ENCODE measurements at regions of chr6 and their contacts with region 1.

Region 1: DNA sequence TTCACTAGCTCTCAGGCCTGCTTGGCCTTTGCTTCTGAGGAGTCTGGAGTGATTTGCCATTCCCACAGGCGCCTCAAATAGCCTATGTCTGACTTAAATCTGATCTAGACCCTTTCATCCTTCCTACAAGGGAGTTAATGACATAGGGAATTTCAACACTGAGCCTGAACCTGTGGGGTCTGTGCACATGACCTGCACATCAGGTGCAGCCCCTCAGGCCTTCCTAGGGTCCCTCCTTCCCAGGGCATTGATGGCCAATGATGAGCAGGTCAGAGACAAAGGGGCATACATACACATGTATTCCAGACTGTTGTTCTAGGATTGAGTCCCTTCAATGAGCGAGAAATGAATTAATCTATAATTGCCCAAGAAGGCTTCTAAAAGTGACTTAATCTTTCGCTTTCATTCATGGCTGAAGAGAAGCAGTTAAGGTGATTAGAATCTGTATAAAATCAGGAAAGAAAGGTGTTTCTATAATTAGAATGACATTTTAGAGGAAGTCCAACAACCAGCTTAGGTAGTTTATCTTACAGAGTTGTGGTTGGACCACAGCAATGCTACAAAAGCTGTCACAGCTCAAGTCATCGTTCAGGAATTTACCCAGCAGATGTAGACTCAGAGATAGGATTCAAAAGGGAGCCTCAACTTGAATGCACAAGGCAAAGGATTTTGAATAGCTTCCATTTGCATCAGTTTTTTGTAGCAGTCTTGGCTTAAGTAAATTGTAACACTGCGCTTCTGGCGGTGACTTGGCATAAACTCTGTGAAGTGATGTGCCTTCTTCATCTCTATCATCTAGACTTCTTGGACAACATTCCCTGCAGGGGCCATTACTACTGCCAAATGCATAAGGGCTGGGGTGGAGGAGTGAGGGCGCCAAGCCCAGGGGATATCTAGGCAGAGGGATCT is 27.0 kb upstream of the TBC1D7 start:
- H3K4me3 Mint-ChIP-seq: no peak overlapping the region
- H3K27ac Mint-ChIP-seq: no peak overlapping the region
- H3K4me1 Mint-ChIP-seq: peaks cover 46% of the 10 kb centered on the region
- H3K27me3 Mint-ChIP-seq: peaks cover 4% of the 10 kb centered on the region

Region 2: GRCh38 chr6:13427801-13428582 is 72.7 kb after region 1 on chr6:
- intact Hi-C with region 1: loop called (anchors 10 kb)
- H3K4me3 Mint-ChIP-seq: peak overlapping the region; percentile 30
- H3K27ac Mint-ChIP-seq: peak overlapping the region; percentile 75
- H3K4me1 Mint-ChIP-seq: peaks cover 69% of the 10 kb centered on the region
- H3K27me3 Mint-ChIP-seq: peaks cover 5% of the 10 kb centered on the region